Cardiac septum (tissue), 1 donor: ENCODE measurements at regions of chr17 and their contacts with region 1.

Region 1: GRCh38 chr17:78112518-78113226 is 15.9 kb downstream of the TMC6 start:
- DNase-seq: peak; percentile 92

Region 2: GRCh38 chr17:78176548-78177025 is 63.9 kb after region 1 on chr17:
- intact Hi-C with region 1: loop called (anchors 2 kb)
- DNase-seq: peak; percentile 92

Region 3: GRCh38 chr17:78250891-78251794 is 138.5 kb after region 1 on chr17:
- intact Hi-C with region 1: loop called (anchors 2 kb)
- DNase-seq: peak; percentile 95

Region 4: DNA sequence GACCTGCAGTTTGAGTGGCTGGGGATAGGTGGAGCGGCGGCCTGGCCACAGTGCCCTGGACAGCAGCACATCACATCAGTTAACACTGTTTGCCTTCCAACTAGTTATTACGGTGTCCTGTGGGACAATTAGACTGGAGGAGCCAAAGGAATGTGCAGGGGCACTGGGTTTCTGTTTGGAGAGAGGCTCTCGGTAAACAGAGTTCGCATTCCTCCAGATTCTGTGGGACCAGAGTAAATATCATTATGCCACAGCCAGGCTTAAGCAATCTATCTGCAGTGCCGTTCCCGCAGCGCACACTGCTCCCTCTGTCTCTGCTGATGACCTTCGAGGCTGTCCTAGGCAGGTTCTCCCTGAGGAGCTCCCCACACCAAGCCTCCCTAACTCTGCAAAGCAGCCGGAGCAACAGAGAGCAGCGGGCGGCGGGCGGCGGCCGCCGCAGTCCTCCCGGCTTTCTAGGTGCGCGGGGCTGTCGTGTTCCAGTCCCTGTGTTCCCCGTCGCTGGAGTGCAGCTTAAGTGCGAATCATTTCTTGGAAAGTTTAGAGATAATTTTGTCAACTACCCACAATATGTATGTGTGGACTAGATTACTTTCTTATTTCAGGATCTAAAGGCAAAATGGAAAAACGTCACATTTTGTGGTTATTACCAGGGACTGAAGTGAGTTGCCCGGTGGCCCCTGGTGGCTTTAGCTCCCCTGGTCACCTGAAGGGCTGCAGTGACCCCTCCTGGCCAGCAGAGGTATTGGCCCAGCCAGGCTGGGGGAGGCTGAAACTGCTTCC is 309.0 kb after region 1 on chr17:
- intact Hi-C with region 1: loop called (anchors 5 kb)
- DNase-seq: peak; percentile 93